GM13976 (cell line): ENCODE measurements at regions of chr6 and their contacts with region 1.

Region 1: DNA sequence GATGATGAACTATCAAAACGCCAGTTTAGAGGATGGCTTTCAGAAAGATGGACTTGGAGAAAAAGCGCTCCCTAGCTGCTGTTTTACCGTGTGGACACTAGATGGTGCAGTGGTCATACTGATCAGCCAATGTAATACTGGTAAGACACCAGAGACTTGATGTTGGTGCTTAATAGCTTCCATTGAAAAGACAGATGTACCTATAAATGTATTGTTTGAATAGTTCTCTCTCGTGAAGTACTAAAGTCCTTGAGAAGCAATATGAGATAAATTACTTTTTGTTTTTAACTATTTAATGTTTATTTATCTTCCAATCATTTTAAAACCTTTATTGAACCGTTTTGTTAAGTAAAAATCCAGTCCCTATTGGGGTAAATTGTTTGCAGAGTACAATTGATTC is 63.9 kb upstream of the FUCA2 start:
- DNase-seq: peak; percentile 76
- CTCF ChIP-seq: peak; percentile 70

Region 2: GRCh38 chr6:142429195-142429594 is 1146.2 kb before region 1 on chr6:
- in situ Hi-C with region 1: no loop called
- DNase-seq: no peak
- CTCF ChIP-seq: no peak

Region 3: GRCh38 chr6:142975365-142975764 is 600.1 kb before region 1 on chr6:
- in situ Hi-C with region 1: no loop called
- DNase-seq: no peak
- CTCF ChIP-seq: no peak

Region 4: GRCh38 chr6:143374014-143374413 is 201.4 kb before region 1 on chr6:
- in situ Hi-C with region 1: no loop called
- DNase-seq: no peak
- CTCF ChIP-seq: peak; percentile 5

Region 5: DNA sequence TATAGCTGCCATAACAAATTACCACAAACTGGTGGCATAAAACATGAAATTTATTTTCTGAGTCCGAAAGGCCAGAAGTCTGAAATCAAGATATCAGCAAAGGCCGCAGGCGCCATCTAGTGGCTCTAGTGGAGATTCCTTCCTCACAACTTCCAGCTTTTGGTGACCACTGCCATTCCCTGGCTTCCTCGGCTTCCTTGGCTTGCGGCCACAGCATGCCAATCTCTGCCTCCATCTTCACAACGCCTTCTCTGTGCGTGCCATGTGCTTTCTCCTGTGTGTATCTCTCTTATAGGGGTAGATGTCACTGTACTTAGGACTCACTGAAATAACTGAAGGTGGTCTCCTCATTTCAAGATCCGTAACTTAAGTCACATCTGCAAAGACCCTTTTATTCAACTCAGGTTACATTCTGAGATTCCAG is 438.1 kb after region 1 on chr6:
- in situ Hi-C with region 1: loop called (anchors 5 kb)
- DNase-seq: peak; percentile 50
- CTCF ChIP-seq: peak; percentile 73